ENCODE measurements at regions of chr5 and their contacts with region 1.

Region 1: DNA sequence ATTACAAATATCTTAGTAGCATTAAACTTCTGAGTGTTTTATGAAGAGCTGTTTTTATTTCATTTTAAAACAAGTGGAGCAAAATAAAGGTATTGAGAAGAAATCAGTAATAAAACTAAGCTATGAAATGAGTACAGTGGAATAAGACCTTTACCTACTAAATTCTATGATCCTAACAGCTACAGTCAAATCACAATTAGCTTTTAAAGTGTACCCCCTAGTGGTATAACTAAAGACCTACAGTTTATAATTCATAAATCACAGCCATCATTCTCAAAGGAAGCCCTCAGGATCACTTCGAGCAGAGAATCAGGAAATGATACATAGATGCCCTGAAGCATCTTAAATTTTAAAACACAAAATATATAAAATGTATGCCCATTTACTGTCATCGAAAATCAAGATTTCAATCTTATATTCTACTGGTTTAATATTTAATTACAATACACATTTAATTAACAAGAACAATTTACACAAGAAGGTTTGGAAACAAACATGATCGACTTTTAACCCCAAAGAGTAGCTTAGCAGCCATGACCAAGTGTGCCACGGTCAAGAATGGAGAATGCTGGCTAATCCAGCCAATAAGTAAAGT is 12.3 kb downstream of the CCNH start:
- DNase-seq: peak in 3 of 14 experiments; percentile 57 to 69 (median 60)
- ATAC-seq: peak; percentile 81
- H3K4me3 ChIP-seq: no peak overlapping the region
- H3K4me3 Mint-ChIP-seq: no peak overlapping the region
- H3K27ac ChIP-seq: no peak overlapping the region
- H3K27ac Mint-ChIP-seq: peak overlapping the region; percentile 4
- H3K4me1 ChIP-seq: no peaks in the 10 kb centered on the region
- H3K4me1 Mint-ChIP-seq: peaks cover 49% of the 10 kb centered on the region
- H3K27me3 ChIP-seq: no peaks in the 10 kb centered on the region
- H3K27me3 Mint-ChIP-seq: no peaks in the 10 kb centered on the region
- CTCF ChIP-seq: peak; percentile 82

Region 2: DNA sequence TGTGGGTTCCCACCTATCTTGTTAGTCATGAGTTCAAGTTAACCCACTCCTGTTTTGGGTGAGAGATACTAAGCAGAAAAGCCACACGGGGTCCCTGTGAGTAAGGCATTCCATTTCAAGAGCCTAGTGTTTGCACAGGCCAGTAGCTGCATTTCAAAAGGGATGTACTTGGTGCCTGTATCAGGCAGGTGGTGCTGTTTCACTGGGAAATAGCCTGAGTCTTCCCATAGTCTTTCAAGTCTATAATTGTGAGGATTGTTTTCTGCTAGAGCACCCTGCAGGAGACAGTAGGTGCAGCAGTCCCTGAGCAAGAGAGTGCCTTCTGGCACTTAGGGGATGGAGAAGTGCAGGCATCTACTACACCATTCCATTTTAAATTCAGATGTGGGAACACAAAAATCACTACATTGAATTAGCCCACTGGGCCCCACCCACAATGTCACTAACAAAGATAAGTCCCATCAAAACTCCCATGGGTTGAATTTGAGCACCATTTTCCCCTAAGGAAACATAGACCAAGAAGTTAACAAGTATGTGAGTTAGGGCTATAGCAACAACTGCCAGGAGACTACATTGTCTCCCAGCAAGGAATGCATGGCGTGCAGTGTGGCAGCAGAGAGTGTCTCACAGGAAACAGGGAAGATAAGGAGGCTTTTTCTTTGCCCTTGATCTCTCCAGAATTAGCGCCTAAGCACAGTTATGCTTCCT is 519.5 kb before region 1 on chr5:
- CTCF ChIA-PET with region 1: no interaction called
- POLR2A ChIA-PET with region 1: interaction called, 5 read pairs
- intact Hi-C with region 1: loop called (anchors 2 to 5 kb)
- DNase-seq: peak in 11 of 14 experiments; percentile 1 to 68 (median 8)
- ATAC-seq: peak; percentile 88
- H3K4me3 ChIP-seq: no peak overlapping the region
- H3K4me3 Mint-ChIP-seq: no peak overlapping the region
- H3K27ac ChIP-seq: no peak overlapping the region
- H3K27ac Mint-ChIP-seq: no peak overlapping the region
- H3K4me1 ChIP-seq: no peaks in the 10 kb centered on the region
- H3K4me1 Mint-ChIP-seq: no peaks in the 10 kb centered on the region
- H3K27me3 ChIP-seq: peaks cover 0 to 4% of the 10 kb centered on the region in 2 experiments
- H3K27me3 Mint-ChIP-seq: peaks cover 7% of the 10 kb centered on the region
- CTCF ChIP-seq: peak; percentile 42

Region 3: GRCh38 chr5:86986837-86987236 is 413.6 kb before region 1 on chr5:
- CTCF ChIA-PET with region 1: no interaction called
- POLR2A ChIA-PET with region 1: no interaction called
- intact Hi-C with region 1: loop called (anchors 5 kb)
- DNase-seq: peak in 1 of 14 experiments; percentile 20
- ATAC-seq: no peak
- H3K4me3 ChIP-seq: no peak overlapping the region
- H3K4me3 Mint-ChIP-seq: no peak overlapping the region
- H3K27ac ChIP-seq: no peak overlapping the region
- H3K27ac Mint-ChIP-seq: no peak overlapping the region
- H3K4me1 ChIP-seq: no peaks in the 10 kb centered on the region
- H3K4me1 Mint-ChIP-seq: no peaks in the 10 kb centered on the region
- H3K27me3 ChIP-seq: no peaks in the 10 kb centered on the region
- H3K27me3 Mint-ChIP-seq: peaks cover 4% of the 10 kb centered on the region
- CTCF ChIP-seq: peak; percentile 51

Region 4: GRCh38 chr5:87383216-87383615 is 17.2 kb before region 1 on chr5:
- CTCF ChIA-PET with region 1: interaction called, 16 read pairs
- POLR2A ChIA-PET with region 1: interaction called, 6 read pairs
- intact Hi-C with region 1: no loop called
- DNase-seq: no peak
- ATAC-seq: no peak
- H3K4me3 ChIP-seq: no peak overlapping the region
- H3K4me3 Mint-ChIP-seq: no peak overlapping the region
- H3K27ac ChIP-seq: no peak overlapping the region
- H3K27ac Mint-ChIP-seq: no peak overlapping the region
- H3K4me1 ChIP-seq: no peaks in the 10 kb centered on the region
- H3K4me1 Mint-ChIP-seq: peaks cover 26% of the 10 kb centered on the region
- H3K27me3 ChIP-seq: no peaks in the 10 kb centered on the region
- H3K27me3 Mint-ChIP-seq: no peaks in the 10 kb centered on the region
- CTCF ChIP-seq: no peak

Region 5: GRCh38 chr5:87412630-87413342 is 12.4 kb after region 1 on chr5 and contains the start of gene CCNH:
- CTCF ChIA-PET with region 1: interaction called, 14 read pairs
- POLR2A ChIA-PET with region 1: interaction called, 37 read pairs
- intact Hi-C with region 1: loop called in 1 of 2 experiments (anchors 1 kb)
- DNase-seq: peak; percentile 91 to 99 (median 95)
- ATAC-seq: peak; percentile 95
- H3K4me3 ChIP-seq: peak within 1 kb of the TSS; percentile 95
- H3K4me3 Mint-ChIP-seq: peak within 1 kb of the TSS; percentile 97
- H3K27ac ChIP-seq: peak within 1 kb of the TSS; percentile 90 to 98
- H3K27ac Mint-ChIP-seq: peak within 1 kb of the TSS; percentile 96
- H3K4me1 ChIP-seq: peaks cover 19% of the 10 kb centered on the region
- H3K4me1 Mint-ChIP-seq: peaks cover 50% of the 10 kb centered on the region
- H3K27me3 ChIP-seq: no peaks in the 10 kb centered on the region
- H3K27me3 Mint-ChIP-seq: no peaks in the 10 kb centered on the region
- CTCF ChIP-seq: no peak
- total RNA-seq, gene CCNH: 309 to 311 TPM

Region 6: GRCh38 chr5:87705876-87706275 is 305.5 kb after region 1 on chr5:
- CTCF ChIA-PET with region 1: no interaction called
- POLR2A ChIA-PET with region 1: no interaction called
- intact Hi-C with region 1: no loop called
- DNase-seq: no peak
- ATAC-seq: no peak
- H3K4me3 ChIP-seq: no peak overlapping the region
- H3K4me3 Mint-ChIP-seq: no peak overlapping the region
- H3K27ac ChIP-seq: no peak overlapping the region
- H3K27ac Mint-ChIP-seq: no peak overlapping the region
- H3K4me1 ChIP-seq: no peaks in the 10 kb centered on the region
- H3K4me1 Mint-ChIP-seq: no peaks in the 10 kb centered on the region
- H3K27me3 ChIP-seq: no peaks in the 10 kb centered on the region
- H3K27me3 Mint-ChIP-seq: no peaks in the 10 kb centered on the region
- CTCF ChIP-seq: no peak